ENCODE measurements at regions of chr12 and their contacts with region 1.

Region 1: GRCh38 chr12:108193917-108194316 is 64.8 kb downstream of the WSCD2 start:
- DNase-seq: peak; percentile 31 to 35
- H3K4me3 ChIP-seq: no peak overlapping the region
- H3K27ac ChIP-seq: no peak overlapping the region
- H3K4me1 ChIP-seq: no peaks in the 10 kb centered on the region
- H3K27me3 ChIP-seq: no peaks in the 10 kb centered on the region
- CTCF ChIP-seq: peak; percentile 61 to 72 (median 68)
- POLR2A ChIP-seq: no peak

Region 2: GRCh38 chr12:108099073-108099472 is 94.8 kb before region 1 on chr12:
- intact Hi-C with region 1: loop called (anchors 5 kb)
- DNase-seq: no peak
- H3K4me3 ChIP-seq: no peak overlapping the region
- H3K27ac ChIP-seq: no peak overlapping the region
- H3K4me1 ChIP-seq: no peaks in the 10 kb centered on the region
- H3K27me3 ChIP-seq: no peaks in the 10 kb centered on the region
- CTCF ChIP-seq: peak; percentile 61 to 65 (median 63)
- POLR2A ChIP-seq: no peak

Region 3: GRCh38 chr12:108425333-108425732 is 231.4 kb after region 1 on chr12:
- intact Hi-C with region 1: no loop called
- DNase-seq: no peak
- H3K4me3 ChIP-seq: no peak overlapping the region
- H3K27ac ChIP-seq: no peak overlapping the region
- H3K4me1 ChIP-seq: no peaks in the 10 kb centered on the region
- H3K27me3 ChIP-seq: no peaks in the 10 kb centered on the region
- CTCF ChIP-seq: no peak
- POLR2A ChIP-seq: no peak

Measured in uterus (tissue), 4 donors.